Activated CD4-positive, alpha-beta T cell treated with anti-CD3 and anti-CD28 coated beads for 36 hours (primary cell): ENCODE measurements at regions of chr2 and their contacts with region 1.

Region 1: GRCh38 chr2:174771631-174772471 is 7.6 kb upstream of the CHRNA1 start:
- DNase-seq: peak; percentile 77
- ATAC-seq: peak; percentile 89
- H3K4me3 Mint-ChIP-seq: no peak overlapping the region
- H3K27ac Mint-ChIP-seq: no peak overlapping the region
- H3K4me1 Mint-ChIP-seq: peaks cover 17% of the 10 kb centered on the region
- H3K27me3 Mint-ChIP-seq: no peaks in the 10 kb centered on the region

Region 2: GRCh38 chr2:174350018-174350417 is 421.8 kb before region 1 on chr2:
- CTCF ChIA-PET with region 1: no interaction called
- POLR2A ChIA-PET with region 1: no interaction called
- intact Hi-C with region 1: no loop called
- DNase-seq: no peak
- ATAC-seq: no peak
- H3K4me3 Mint-ChIP-seq: no peak overlapping the region
- H3K27ac Mint-ChIP-seq: no peak overlapping the region
- H3K4me1 Mint-ChIP-seq: peaks cover 2% of the 10 kb centered on the region
- H3K27me3 Mint-ChIP-seq: peaks cover 8% of the 10 kb centered on the region

Region 3: GRCh38 chr2:174985630-174986029 is 213.8 kb after region 1 on chr2:
- CTCF ChIA-PET with region 1: interaction called, 24 read pairs
- POLR2A ChIA-PET with region 1: no interaction called
- intact Hi-C with region 1: loop called (anchors 1 to 2 kb)
- DNase-seq: no peak
- ATAC-seq: no peak
- H3K4me3 Mint-ChIP-seq: no peak overlapping the region
- H3K27ac Mint-ChIP-seq: no peak overlapping the region
- H3K4me1 Mint-ChIP-seq: no peaks in the 10 kb centered on the region
- H3K27me3 Mint-ChIP-seq: peaks cover 6% of the 10 kb centered on the region

Region 4: GRCh38 chr2:175004980-175005732 is 233.3 kb after region 1 on chr2 and contains the start of gene CHN1:
- CTCF ChIA-PET with region 1: interaction called, 4 read pairs
- POLR2A ChIA-PET with region 1: no interaction called
- intact Hi-C with region 1: loop called in 1 of 2 experiments (anchors 5 kb)
- DNase-seq: peak; percentile 81
- ATAC-seq: peak; percentile 96
- H3K4me3 Mint-ChIP-seq: peak within 1 kb of the TSS; percentile 77
- H3K27ac Mint-ChIP-seq: no peak within 1 kb of the TSS
- H3K4me1 Mint-ChIP-seq: peaks cover 4% of the 10 kb centered on the region
- H3K27me3 Mint-ChIP-seq: peaks cover 46% of the 10 kb centered on the region
- total RNA-seq, gene CHN1: 3.8 TPM

Region 5: DNA sequence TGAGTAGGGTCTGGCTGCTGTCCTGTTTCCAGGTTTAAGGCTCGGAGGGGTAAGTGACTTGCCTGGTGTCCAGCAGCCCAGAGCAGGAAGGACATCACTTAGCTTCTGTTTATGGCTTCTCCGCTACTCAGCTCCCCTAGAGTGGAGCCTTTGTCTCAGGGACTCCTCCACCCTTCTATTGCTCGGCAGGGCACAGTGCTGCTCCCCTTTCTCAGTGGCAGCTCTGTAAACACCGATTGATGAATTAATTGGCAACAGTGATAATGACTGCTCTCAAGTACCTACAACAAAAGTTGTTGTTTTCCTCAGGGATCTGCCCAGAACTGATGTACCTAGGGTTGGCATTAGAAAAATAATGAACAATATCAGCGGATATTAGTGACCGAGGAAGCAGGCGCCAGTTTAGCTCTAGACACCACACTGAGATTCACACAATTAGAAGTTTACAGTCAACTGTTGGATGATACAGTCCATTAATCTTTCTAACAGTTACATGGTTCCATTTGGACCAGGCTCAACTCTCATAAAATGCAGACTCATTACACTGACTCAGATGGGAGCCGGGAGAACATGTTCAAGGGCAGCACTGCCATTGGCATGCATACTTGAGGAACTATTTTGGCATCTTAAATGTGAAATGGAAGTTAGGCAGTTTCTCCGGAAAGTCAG is 1763.1 kb after region 1 on chr2:
- CTCF ChIA-PET with region 1: no interaction called
- POLR2A ChIA-PET with region 1: no interaction called
- intact Hi-C with region 1: no loop called
- DNase-seq: no peak
- ATAC-seq: no peak
- H3K4me3 Mint-ChIP-seq: no peak overlapping the region
- H3K27ac Mint-ChIP-seq: no peak overlapping the region
- H3K4me1 Mint-ChIP-seq: no peaks in the 10 kb centered on the region
- H3K27me3 Mint-ChIP-seq: peaks cover 9% of the 10 kb centered on the region